ENCODE measurements at regions of chr13 and their contacts with region 1.

Region 1: DNA sequence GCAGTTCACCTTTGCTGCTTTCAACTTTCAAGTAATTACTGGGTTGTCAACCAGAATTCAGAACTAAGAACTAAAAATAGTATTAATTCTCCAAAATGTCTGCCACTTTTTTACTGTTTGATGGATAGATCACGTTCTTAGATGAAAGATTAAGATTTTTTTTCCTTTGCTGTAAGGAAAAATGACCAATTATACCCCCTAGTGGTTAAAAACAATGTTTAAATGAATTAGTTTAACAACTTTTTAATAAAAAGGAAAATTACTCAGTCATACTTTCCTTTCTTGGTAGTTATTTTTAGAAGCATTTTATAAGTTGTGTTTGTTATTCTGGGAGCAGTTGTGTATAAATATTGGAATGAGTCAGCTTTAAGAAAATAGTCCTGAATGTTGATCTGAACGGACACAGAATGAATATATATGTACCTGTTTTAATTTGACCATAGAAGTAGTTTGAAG is 4.6 kb downstream of the TM9SF2 start:
- DNase-seq: no peak
- H3K4me3 ChIP-seq: no peak overlapping the region
- H3K27me3 ChIP-seq: no peaks in the 10 kb centered on the region
- CTCF ChIP-seq: peak; percentile 30; the same call in 1 of the 2 replicates

Region 2: GRCh38 chr13:99356158-99357091 is 149.4 kb before region 1 on chr13:
- CTCF ChIA-PET with region 1: no interaction called
- POLR2A ChIA-PET with region 1: no interaction called
- DNase-seq: no peak
- H3K4me3 ChIP-seq: no peak overlapping the region
- H3K27me3 ChIP-seq: no peaks in the 10 kb centered on the region
- CTCF ChIP-seq: no peak

Region 3: DNA sequence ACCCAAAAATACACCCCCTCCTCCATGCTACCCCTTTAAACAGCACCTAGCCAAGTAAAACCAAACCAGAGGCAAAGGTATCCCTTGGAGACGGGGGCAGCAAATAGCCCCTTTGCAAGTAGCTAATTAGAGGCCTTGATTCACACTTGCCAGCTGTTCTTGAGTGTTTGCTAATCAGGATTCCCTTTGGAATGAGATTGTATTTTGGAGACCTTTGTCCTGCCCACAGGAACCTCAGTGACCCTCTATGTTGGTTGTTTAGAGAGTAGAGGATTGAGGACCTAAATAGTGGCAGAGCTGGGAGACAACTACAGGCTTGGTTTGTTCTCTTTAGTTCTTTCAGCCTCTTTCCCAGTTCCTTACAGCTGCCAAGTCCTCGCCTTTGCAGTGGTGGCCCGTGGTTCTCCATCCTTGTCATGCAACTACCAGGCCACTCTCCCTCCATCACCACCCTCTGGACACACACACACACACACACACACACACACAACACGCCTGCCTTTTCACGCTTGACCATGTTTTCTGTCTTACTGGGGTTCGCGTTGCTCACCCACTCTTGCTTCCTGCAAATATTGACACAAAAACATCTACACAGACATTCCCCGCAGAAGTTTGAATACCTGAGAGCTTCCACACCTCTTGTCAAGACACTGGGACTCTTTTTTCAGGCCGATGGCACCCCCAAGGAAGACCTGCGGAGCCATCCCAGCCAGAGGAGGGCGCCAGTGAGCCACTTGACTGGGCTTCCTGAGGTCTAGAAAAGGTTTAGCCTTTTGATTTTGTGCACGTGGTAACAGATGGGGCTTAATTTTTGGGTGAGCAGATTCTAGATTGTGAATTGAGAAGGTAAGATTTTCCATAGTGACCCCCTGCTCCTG is 118.7 kb before region 1 on chr13:
- CTCF ChIA-PET with region 1: no interaction called
- POLR2A ChIA-PET with region 1: no interaction called
- DNase-seq: no peak
- H3K4me3 ChIP-seq: no peak overlapping the region
- H3K27me3 ChIP-seq: no peaks in the 10 kb centered on the region
- CTCF ChIP-seq: peak; percentile 56

Region 4: DNA sequence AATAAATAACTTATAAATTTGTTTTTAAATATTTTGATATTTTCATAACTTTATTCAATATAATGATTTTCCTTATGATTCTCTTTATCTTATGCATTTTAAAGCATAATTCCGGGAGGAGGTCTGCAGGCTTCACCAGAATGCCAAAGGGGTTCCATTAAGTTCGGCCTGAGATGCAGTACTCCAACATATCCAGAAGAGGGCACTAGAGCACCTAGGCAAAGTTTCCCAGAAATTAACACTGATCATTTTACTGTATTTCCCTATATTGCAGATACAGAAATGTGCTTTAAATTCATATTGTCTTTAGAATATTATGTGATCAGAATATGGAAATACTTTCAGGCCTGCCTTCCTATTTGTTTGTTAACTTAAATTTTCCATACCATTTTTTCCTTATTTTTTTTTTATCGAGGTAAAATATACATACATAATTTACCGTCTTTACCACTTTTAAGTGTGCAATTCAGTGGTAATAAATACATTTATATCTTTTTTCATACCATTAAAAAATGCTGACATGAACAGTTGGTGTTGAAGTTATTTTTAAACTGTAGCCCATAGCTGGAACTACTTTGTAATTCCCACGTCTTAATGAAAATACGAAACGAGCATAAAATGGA is 63.5 kb before region 1 on chr13:
- CTCF ChIA-PET with region 1: interaction called, 24 read pairs
- POLR2A ChIA-PET with region 1: no interaction called
- DNase-seq: no peak
- H3K4me3 ChIP-seq: no peak overlapping the region
- H3K27me3 ChIP-seq: peaks cover 11% of the 10 kb centered on the region
- CTCF ChIP-seq: peak; percentile 93

Region 5: GRCh38 chr13:99516153-99516929 is 10.5 kb after region 1 on chr13:
- CTCF ChIA-PET with region 1: interaction called, 23 read pairs
- POLR2A ChIA-PET with region 1: interaction called, 4 read pairs
- DNase-seq: no peak
- H3K4me3 ChIP-seq: no peak overlapping the region
- H3K27me3 ChIP-seq: no peaks in the 10 kb centered on the region
- CTCF ChIP-seq: no peak

Measured in BJ (cell line).